ENCODE measurements at regions of chr5 and their contacts with region 1.

Region 1: DNA sequence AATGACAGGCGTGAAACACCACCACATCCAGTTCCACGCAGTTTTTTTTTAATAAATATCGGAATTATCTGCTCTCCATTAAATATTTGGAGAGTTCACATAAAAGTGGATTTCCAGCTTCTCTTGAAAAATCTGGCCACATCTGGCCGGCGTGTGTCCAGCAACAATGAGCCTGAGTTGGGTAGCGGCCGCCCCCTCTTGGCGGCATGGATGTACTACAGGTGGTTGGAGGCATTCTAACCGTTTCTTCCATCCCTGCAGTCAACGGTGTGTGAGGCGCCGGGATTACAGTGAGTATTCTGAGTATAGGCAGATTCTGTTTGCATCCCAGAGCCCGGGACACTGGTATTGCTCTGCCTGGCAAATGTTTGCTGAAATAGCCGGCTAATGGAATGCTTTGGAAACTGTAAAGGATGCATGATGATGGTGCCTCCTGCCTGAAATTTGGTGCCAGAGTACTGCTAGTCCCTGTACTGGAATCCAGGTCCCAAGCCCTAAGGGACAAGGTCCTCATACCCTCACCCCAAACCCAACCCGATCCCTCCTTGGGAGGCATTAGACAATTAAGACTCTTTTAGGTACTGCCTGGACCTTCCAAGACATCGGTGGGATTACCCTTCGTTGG is 13.6 kb upstream of the GM2A start:
- DNase-seq: peak; percentile 96
- ATAC-seq: peak; percentile 75

Region 2: DNA sequence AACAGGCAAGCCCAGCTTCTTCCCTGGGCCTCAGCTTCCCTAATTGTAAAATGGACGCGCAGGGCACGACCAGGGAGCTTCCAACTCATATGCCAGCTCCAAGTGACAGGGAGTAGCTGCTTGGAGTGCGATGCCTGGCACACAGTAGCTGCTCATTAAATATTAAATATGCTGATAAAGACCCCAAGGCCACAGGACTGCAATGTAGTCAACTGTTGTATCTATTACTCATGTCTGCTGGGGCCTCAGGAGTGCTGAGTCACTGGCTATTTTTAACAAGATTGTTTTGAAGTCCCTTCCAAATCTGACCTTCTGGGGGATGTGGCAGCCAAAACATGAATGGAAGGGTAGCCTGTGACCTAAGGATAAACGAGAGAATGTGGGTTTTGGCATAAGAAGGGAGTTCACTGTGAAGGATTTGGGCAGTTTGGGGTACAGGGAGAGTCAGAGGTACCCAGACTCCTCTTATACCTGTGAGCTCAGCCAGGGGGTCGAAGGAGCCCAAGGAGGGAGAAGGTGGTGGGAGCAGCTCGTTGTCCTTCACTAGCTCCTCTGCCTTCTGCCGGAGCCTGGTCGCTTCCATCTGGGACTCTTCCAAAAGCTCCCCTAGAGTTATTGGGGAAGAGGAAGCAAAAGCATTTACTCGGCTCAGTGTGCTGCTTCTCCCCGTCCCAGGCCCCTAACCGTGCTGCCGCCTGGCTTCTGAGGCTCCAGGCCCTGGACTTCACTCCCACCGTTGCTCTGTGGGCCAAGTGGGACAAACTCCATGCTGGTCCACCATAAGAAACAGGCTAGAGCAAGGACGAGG is 176.0 kb before region 1 on chr5:
- intact Hi-C with region 1: loop called (anchors 5 kb)
- DNase-seq: no peak
- ATAC-seq: peak; percentile 66

Region 3: GRCh38 chr5:151126199-151126645 is 113.1 kb before region 1 on chr5:
- intact Hi-C with region 1: loop called (anchors 2 kb)
- DNase-seq: peak; percentile 93
- ATAC-seq: peak; percentile 60

Region 4: GRCh38 chr5:151223469-151224264 is 15.7 kb before region 1 on chr5 and contains the start of gene CCDC69:
- intact Hi-C with region 1: loop called (anchors 2 kb)
- DNase-seq: peak; percentile 90
- ATAC-seq: peak; percentile 93
- total RNA-seq, gene CCDC69: 181 TPM

Measured in Right ventricle myocardium inferior (tissue), 1 donor.